OCI-LY7 (cell line): ENCODE measurements at regions of chr4 and their contacts with region 1.

Region 1: DNA sequence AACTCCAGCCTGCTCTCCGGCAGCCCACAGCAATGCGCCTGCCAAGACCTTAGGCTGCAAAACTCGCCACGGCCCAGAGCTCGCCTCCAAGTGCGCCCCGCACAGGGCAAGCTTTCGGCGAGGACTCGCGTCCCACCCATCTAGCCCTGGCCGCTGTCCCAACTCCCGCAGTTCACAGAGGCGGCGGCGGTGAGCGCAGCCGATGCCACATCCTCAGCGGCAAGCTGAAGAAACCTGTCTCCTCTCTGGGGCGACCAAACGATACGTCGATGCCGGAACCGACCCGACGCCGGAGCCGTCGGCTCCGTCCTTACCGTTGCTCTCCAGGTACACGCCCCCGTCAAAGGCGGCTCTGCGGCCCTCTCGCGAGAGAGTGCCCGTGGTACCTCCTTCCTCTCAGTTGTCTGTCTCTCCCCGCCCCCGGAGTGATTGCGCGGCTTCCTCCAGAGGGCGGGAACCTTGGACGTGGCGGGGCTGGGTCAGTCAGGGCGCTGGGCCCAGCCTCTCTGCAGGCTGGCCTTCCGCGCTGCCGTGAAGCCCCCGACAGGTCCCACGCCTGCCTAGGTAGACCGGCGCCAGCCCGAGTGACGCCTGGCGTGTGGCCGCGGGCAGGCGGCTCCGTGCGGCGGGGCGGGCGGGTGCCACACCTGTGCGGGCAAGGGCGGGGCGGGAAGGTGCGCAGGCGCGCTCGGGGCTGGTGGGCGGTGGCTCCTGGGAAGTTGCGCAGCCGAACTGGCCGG is 380 bp upstream of the RAB33B start:
- DNase-seq: peak; percentile 97
- H3K4me3 ChIP-seq: peak overlapping the region; percentile 82
- H3K27ac ChIP-seq: peak overlapping the region; percentile 88
- H3K4me1 ChIP-seq: peaks cover 43% of the 10 kb centered on the region
- CTCF ChIP-seq: peak; percentile 48; the same call in 1 of the 2 replicates

Region 2: GRCh38 chr4:139015269-139015947 is 438.1 kb before region 1 on chr4 and contains the start of gene NOCT:
- CTCF ChIA-PET with region 1: no interaction called
- POLR2A ChIA-PET with region 1: no interaction called
- intact Hi-C with region 1: loop called (anchors 2 kb)
- DNase-seq: peak; percentile 95
- H3K4me3 ChIP-seq: peak within 1 kb of the TSS; percentile 88
- H3K27ac ChIP-seq: peak within 1 kb of the TSS; percentile 79
- H3K4me1 ChIP-seq: peaks cover 38% of the 10 kb centered on the region
- CTCF ChIP-seq: no peak
- total RNA-seq, gene NOCT: 12.7 and 22.8 TPM in 2 replicates

Region 3: DNA sequence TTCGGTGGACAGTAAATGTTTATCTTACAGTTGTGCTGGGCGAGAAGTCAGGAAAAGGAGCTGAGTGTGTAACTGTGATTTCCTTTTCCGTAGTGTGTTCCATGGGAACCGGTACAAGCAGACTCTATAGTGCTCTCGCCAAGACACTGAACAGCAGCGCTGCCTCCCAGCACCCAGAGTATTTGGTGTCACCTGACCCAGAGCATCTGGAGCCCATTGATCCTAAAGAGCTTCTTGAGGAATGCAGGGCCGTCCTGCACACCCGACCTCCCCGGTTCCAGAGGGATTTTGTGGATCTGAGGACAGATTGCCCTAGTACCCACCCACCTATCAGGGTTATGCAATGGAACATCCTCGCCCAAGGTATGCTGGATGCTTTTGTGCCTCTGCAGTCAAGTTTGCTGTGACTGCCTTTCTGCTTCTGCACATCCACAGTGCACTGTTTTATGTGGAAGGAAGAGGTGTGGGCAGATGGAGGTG is 410.5 kb before region 1 on chr4:
- CTCF ChIA-PET with region 1: no interaction called
- POLR2A ChIA-PET with region 1: no interaction called
- intact Hi-C with region 1: no loop called
- DNase-seq: no peak
- H3K4me3 ChIP-seq: no peak overlapping the region
- H3K27ac ChIP-seq: no peak overlapping the region
- H3K4me1 ChIP-seq: peaks cover 16% of the 10 kb centered on the region
- CTCF ChIP-seq: no peak

Region 4: DNA sequence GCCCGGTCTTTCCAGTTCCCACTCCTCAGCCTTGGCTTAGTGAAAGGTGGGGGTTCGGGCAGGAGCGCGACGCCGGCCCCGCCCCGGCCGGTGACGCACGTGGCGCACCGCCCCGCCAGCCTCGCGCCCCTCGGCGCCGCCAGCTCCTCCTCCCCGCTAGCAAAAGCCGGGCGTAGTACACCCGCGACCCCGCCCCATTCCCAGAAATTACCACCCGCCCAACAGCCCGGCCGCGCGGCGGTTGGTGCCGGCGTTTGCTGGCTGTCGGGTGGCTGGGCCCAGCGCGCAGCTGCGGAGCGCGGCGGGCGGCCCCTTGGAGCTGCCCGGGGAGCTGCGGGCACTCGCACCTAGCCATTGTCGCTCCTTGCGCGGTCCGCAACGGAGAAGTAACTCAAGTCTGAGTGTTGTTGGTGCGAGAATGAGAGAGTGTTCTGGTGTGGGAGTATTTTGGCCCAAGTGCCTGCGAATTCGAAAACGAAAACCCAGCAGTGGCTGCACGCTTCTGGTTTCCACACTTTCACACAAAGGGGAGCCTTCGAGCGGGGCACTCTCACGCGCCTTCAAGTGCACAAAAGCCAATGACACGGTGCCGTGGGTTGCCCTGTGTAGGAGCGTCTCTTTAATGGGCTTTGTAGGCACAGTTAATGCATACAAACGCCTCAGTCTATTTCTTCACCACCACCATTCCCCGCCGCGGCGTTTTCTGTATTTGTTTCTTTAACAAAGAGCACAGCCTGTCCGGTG is 275.5 kb before region 1 on chr4:
- CTCF ChIA-PET with region 1: no interaction called
- POLR2A ChIA-PET with region 1: interaction called, 3 read pairs
- intact Hi-C with region 1: loop called (anchors 1 kb)
- DNase-seq: peak; percentile 95
- H3K4me3 ChIP-seq: peak overlapping the region; percentile 83
- H3K27ac ChIP-seq: peak overlapping the region; percentile 89
- H3K4me1 ChIP-seq: peaks cover 25% of the 10 kb centered on the region
- CTCF ChIP-seq: no peak

Region 5: GRCh38 chr4:139315221-139315675 is 138.3 kb before region 1 on chr4:
- CTCF ChIA-PET with region 1: no interaction called
- POLR2A ChIA-PET with region 1: no interaction called
- intact Hi-C with region 1: loop called (anchors 1 kb)
- DNase-seq: peak; percentile 65
- H3K4me3 ChIP-seq: peak overlapping the region; percentile 54
- H3K27ac ChIP-seq: peak overlapping the region; percentile 79
- H3K4me1 ChIP-seq: peaks cover 67% of the 10 kb centered on the region
- CTCF ChIP-seq: no peak

Region 6: DNA sequence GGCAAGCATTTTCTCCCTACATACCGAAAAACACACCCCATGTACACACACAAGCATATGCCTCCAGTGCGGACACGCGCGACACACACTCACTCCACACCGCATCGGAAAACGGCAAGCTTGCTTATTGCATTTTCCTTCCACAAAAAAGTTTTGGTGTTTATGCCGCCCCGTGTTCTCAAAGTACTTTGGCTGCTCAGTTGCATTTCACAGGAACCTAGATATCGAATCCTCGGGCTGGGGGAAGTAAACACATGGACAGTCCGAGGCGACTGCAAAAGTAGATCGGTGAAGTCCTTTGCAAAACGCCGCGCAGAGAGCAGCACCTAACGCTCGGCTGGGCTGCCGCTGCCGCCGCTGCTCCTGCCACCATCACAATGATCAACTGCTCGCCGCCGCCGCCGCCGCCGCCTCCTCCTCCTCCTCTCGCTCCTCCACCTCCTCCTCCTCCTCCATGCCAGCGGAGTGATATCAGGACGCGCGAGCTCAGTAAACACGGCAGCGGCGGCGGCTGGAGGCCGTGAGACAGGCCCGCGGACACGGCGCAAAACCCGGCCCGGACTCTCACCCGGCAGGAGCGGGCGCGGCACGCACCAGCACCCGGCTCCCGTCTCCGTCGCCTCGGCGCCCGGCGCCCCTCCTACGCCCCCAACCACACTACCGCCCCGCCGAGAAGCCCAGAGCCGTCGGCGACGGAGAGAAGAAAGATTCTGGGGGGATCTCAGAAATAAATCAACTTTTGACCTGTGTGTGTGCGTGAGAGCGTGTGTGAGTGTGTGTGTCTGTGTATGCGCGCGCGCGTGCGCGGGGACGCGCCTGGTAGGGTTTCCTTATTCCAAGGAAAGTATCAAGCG is 700.4 kb after region 1 on chr4 and contains the start of gene MAML3:
- CTCF ChIA-PET with region 1: no interaction called
- POLR2A ChIA-PET with region 1: no interaction called
- intact Hi-C with region 1: loop called (anchors 5 kb)
- DNase-seq: peak; percentile 91
- H3K4me3 ChIP-seq: peak within 1 kb of the TSS; percentile 72
- H3K27ac ChIP-seq: peak within 1 kb of the TSS; percentile 52
- H3K4me1 ChIP-seq: peaks cover 59% of the 10 kb centered on the region
- CTCF ChIP-seq: no peak
- total RNA-seq, gene MAML3: 1.2 and 1.8 TPM in 2 replicates